IMR-90 (cell line): ENCODE measurements at regions of chr16 and their contacts with region 1.

Region 1: GRCh38 chr16:86072328-86073102 is 173.6 kb downstream of the IRF8 start:
- DNase-seq: peak; percentile 86
- ATAC-seq: peak; percentile 73
- H3K4me3 ChIP-seq: no peak overlapping the region
- H3K27ac ChIP-seq: 0 out of 2 replicates have a peak overlapping the region, but pooled peaks have one; percentile 1
- H3K4me1 ChIP-seq: peaks cover 17% of the 10 kb centered on the region
- H3K27me3 ChIP-seq: no peaks in the 10 kb centered on the region
- CTCF ChIP-seq: peak; percentile 90
- POLR2A ChIP-seq: 0 out of 2 replicates have a peak, but pooled peaks have one; percentile 24
- RAD21 ChIP-seq: peak; percentile 97

Region 2: DNA sequence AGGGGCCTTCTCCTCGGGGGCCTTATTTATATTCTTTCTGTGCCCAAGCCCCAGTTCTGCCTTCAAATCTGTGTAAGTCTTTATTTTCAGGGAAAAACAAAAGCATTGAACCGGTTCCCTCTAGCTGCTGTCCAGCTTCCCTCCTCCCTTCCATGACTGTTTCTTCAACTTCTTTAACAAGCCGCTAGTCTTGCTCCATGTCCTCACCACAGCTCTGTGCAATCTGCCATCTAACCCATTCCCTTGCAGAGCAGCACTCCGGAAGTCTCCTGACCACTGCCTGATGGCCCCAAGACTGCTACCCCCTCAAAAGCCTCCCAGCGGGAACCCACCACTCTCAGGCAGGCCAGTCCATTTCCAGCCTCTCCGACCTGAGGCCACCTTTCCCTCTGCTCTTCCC is 290.1 kb before region 1 on chr16:
- CTCF ChIA-PET with region 1: no interaction called
- POLR2A ChIA-PET with region 1: no interaction called
- dilution Hi-C with region 1: no loop called
- in situ Hi-C with region 1: no loop called
- intact Hi-C with region 1: no loop called
- DNase-seq: peak; percentile 18
- ATAC-seq: peak; percentile 5; the same call in 1 of the 2 replicates
- H3K4me3 ChIP-seq: no peak overlapping the region
- H3K27ac ChIP-seq: no peak overlapping the region
- H3K4me1 ChIP-seq: peaks cover 18% of the 10 kb centered on the region
- H3K27me3 ChIP-seq: no peaks in the 10 kb centered on the region
- CTCF ChIP-seq: no peak
- POLR2A ChIP-seq: no peak
- RAD21 ChIP-seq: no peak

Region 3: GRCh38 chr16:86100205-86101136 is 28.0 kb after region 1 on chr16:
- CTCF ChIA-PET with region 1: no interaction called
- POLR2A ChIA-PET with region 1: no interaction called
- dilution Hi-C with region 1: no loop called
- in situ Hi-C with region 1: no loop called
- intact Hi-C with region 1: no loop called
- DNase-seq: peak; percentile 78
- ATAC-seq: peak; percentile 97
- H3K4me3 ChIP-seq: no peak overlapping the region
- H3K27ac ChIP-seq: no peak overlapping the region
- H3K4me1 ChIP-seq: peaks cover 5% of the 10 kb centered on the region; the same call in 1 of the 2 replicates
- H3K27me3 ChIP-seq: no peaks in the 10 kb centered on the region
- CTCF ChIP-seq: no peak
- POLR2A ChIP-seq: no peak
- RAD21 ChIP-seq: no peak

Region 4: GRCh38 chr16:86195863-86196630 is 123.5 kb after region 1 on chr16:
- CTCF ChIA-PET with region 1: no interaction called
- POLR2A ChIA-PET with region 1: interaction called, 11 read pairs
- dilution Hi-C with region 1: no loop called
- in situ Hi-C with region 1: no loop called
- intact Hi-C with region 1: no loop called
- DNase-seq: no peak
- ATAC-seq: no peak
- H3K4me3 ChIP-seq: no peak overlapping the region
- H3K27ac ChIP-seq: no peak overlapping the region
- H3K4me1 ChIP-seq: peaks cover 20% of the 10 kb centered on the region
- H3K27me3 ChIP-seq: no peaks in the 10 kb centered on the region
- CTCF ChIP-seq: no peak
- POLR2A ChIP-seq: no peak
- RAD21 ChIP-seq: no peak

Region 5: DNA sequence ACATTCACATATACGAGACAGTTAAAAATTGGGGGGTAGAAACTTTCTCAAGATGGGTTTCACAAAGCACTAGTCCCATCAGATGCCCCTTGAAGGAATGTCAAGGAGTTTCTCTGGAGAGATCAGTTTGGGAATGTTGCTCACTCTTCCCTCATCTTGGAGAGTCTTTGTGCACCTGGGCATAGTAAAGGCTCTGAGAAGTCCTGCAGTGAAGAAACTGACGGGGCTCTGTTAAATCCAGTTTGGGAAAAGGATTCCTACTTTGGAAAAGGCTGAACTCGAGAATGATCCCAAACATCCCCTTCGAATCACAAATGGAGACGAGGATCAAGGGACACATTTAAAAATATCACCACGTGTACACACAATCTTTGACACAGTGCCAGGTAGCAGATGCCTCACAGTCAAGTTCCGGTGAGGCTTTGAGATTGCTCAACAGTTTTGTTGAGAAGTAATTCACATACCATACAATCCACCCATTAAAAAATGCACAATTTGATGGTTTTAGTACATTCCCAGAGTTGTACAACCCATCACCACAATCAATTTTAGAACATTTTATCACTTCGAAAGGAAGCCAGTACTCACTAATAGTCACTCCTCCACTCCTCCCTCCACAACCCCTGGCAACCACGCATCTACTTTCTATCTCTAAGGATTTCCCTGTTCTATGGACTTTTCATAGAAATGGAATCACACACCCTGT is 234.4 kb after region 1 on chr16:
- CTCF ChIA-PET with region 1: interaction called, 12 read pairs
- POLR2A ChIA-PET with region 1: no interaction called
- dilution Hi-C with region 1: no loop called
- in situ Hi-C with region 1: loop called (anchors 5 kb)
- intact Hi-C with region 1: no loop called
- DNase-seq: peak; percentile 90
- ATAC-seq: peak; percentile 13
- H3K4me3 ChIP-seq: no peak overlapping the region
- H3K27ac ChIP-seq: peak overlapping the region; percentile 67
- H3K4me1 ChIP-seq: peaks cover 38% of the 10 kb centered on the region
- H3K27me3 ChIP-seq: no peaks in the 10 kb centered on the region
- CTCF ChIP-seq: no peak
- POLR2A ChIP-seq: no peak
- RAD21 ChIP-seq: no peak

Region 6: DNA sequence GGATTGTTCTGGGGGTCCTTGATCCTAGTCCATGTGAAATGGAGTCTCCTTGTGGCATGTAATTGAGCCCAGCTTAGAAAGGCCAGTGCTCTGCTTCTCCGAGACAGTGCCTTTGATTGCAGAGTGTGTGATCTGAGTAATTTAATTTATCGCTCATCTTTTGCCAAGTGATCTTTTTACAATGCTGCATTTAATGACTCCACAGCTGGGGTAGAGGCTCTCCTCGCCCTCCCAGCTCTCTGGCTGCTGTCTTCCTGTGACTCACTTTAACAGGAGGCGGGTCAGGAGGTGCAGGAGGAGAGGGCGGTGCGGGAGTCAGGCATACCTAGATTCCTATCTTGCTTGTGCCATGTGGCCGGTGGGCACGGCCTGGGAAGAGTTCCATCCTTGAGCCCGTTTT is 324.4 kb after region 1 on chr16:
- CTCF ChIA-PET with region 1: no interaction called
- POLR2A ChIA-PET with region 1: interaction called, 3 read pairs
- dilution Hi-C with region 1: no loop called
- in situ Hi-C with region 1: loop called (anchors 10 kb)
- intact Hi-C with region 1: loop called (anchors 2 kb)
- DNase-seq: peak; percentile 95
- ATAC-seq: peak; percentile 82
- H3K4me3 ChIP-seq: peak overlapping the region; percentile 10; the same call in 1 of the 2 replicates
- H3K27ac ChIP-seq: peak overlapping the region; percentile 93
- H3K4me1 ChIP-seq: peaks cover 28% of the 10 kb centered on the region
- H3K27me3 ChIP-seq: no peaks in the 10 kb centered on the region
- CTCF ChIP-seq: no peak
- POLR2A ChIP-seq: peak; percentile 61; the same call in 1 of the 2 replicates
- RAD21 ChIP-seq: peak; percentile 4

Region 7: DNA sequence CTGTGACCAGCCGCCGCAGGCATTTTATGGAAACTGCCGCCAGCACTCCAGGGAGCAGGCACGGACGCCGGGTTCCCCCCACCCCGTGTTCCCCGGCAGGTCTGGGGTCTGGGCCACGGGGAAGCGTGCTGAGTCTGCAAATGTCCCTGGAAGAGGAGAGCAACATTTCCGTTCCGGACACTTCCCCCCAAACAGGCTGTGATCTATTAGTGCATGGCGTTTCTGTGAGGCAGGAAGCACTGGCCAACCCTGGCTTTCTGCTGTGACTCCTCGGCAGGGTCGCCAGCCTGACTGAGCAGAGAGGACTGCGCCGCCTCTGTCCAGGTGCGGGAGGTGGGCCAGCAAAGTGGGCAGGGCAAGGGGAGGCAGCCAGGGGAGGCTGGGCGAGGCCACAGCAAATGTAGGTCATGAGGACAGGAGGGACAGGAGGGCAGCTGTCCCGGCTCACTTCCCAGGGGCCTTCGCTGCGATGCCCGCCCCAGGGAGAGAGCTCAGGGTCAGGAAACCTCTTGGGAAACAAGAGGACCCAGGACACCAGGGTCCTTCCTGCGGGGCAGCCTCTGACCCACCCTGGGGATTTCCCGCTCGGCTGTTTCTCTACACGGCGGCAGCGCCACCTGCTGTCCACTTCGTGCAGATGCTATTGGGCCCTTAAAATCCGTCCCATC is 447.3 kb after region 1 on chr16:
- CTCF ChIA-PET with region 1: interaction called, 11 read pairs
- POLR2A ChIA-PET with region 1: no interaction called
- dilution Hi-C with region 1: no loop called
- in situ Hi-C with region 1: loop called (anchors 5 kb)
- intact Hi-C with region 1: no loop called
- DNase-seq: peak; percentile 77
- ATAC-seq: peak; percentile 42
- H3K4me3 ChIP-seq: peak overlapping the region; percentile 13; the same call in 1 of the 2 replicates
- H3K27ac ChIP-seq: peak overlapping the region; percentile 30
- H3K4me1 ChIP-seq: peaks cover 14% of the 10 kb centered on the region
- H3K27me3 ChIP-seq: no peaks in the 10 kb centered on the region
- CTCF ChIP-seq: peak; percentile 87
- POLR2A ChIP-seq: peak; percentile 23; the same call in 1 of the 2 replicates
- RAD21 ChIP-seq: peak; percentile 77